Activated CD8-positive, alpha-beta T cell treated with anti-CD3 and anti-CD28 coated beads, Interleukin-2, amount 10 ng/mL, durations not matched to agents 7 days and 5 days (primary cell): ENCODE measurements at regions of chr9 and their contacts with region 1.

Region 1: DNA sequence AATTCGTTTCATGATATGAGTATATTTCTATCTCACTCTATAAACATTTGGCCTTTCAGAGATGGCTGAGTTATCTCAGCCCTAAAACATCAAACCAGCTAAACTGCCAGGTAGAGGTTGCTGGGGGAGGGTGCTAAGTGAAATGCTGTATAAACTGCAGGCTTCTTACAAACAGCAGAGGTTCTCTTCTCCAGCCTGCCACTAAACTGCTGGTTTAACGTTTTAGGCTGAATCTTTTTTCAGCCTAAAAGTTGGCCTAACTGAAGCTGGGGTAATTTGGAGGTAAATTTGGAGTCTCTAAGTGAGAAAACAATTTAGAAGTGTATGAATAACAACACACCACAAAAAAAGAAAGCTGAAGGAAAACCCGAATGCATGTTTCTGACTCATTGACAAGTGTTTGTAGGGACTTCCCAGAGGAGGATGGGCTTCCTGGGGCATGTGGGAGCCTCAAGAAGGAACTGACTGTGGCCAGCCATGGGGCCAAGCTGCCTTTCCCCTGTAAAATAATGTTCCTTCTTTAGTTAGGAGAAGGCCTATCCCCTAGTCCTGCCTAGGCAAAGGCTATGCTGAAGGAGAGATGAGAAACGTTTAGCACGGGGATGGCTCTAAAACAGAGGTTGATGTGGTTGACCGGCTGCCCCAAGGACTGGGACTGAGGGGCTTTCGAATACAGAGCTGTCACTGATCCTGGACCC is 44.3 kb downstream of the SLC28A3 start:
- DNase-seq: peak; percentile 34
- ATAC-seq: peak; percentile 50
- H3K4me3 Mint-ChIP-seq: peak overlapping the region; percentile 15
- H3K27ac Mint-ChIP-seq: peak overlapping the region; percentile 81
- H3K4me1 Mint-ChIP-seq: peaks cover 64% of the 10 kb centered on the region
- H3K27me3 Mint-ChIP-seq: no peaks in the 10 kb centered on the region

Region 2: GRCh38 chr9:83920927-83921707 is 375.2 kb before region 1 on chr9 and contains the start of gene KIF27:
- CTCF ChIA-PET with region 1: interaction called, 11 read pairs
- POLR2A ChIA-PET with region 1: interaction called, 7 read pairs
- DNase-seq: peak; percentile 98
- ATAC-seq: peak; percentile 91
- H3K4me3 Mint-ChIP-seq: peak within 1 kb of the TSS; percentile 82
- H3K27ac Mint-ChIP-seq: peak within 1 kb of the TSS; percentile 90
- H3K4me1 Mint-ChIP-seq: peaks cover 17% of the 10 kb centered on the region
- H3K27me3 Mint-ChIP-seq: no peaks in the 10 kb centered on the region
- total RNA-seq, gene KIF27: 1.9 to 3.2 TPM

Region 3: GRCh38 chr9:83980395-83981125 is 315.7 kb before region 1 on chr9 and contains the start of gene RMI1:
- CTCF ChIA-PET with region 1: interaction called, 5 read pairs
- POLR2A ChIA-PET with region 1: interaction called, 27 read pairs
- DNase-seq: peak; percentile 99
- ATAC-seq: peak; percentile 73
- H3K4me3 Mint-ChIP-seq: peak within 1 kb of the TSS; percentile 95
- H3K27ac Mint-ChIP-seq: peak within 1 kb of the TSS; percentile 99
- H3K4me1 Mint-ChIP-seq: peaks cover 49% of the 10 kb centered on the region
- H3K27me3 Mint-ChIP-seq: no peaks in the 10 kb centered on the region
- total RNA-seq, gene RMI1: 23.3 to 23.6 TPM

Region 4: DNA sequence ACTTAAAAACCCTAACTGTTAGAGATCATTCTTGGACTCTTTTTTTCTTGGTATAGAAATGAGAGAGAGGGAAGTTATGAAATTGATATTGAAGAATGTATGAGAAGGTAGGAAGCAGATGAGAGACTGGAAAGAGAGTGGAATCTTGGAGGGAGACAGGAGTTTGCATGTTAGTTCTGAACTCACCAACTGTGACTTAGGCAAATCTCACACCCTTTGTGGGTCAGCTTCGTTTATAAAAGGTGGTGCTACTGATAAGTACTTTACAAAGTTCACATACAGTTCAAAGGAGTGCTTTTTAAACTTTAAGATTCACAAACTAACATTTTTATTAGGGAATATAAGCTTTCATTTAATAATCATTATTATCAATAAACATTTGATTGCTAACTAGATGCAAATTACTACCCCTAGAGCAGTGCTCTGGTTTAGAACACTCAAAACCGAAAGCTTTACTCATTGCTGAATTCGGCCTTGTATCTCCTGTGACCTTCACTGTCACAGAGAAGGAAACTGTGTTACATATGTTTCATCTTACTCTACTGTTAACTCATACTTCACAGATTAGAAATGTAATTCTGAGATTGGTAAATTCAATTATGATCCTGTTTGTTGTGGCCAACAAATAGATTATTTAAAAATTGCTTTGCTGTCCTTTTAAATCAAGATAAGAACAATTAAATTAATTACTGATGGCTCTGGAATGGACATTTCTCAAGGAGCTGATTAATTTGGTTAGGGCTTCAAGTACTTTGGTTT is 172.5 kb before region 1 on chr9:
- CTCF ChIA-PET with region 1: no interaction called
- POLR2A ChIA-PET with region 1: no interaction called
- DNase-seq: no peak
- ATAC-seq: no peak
- H3K4me3 Mint-ChIP-seq: no peak overlapping the region
- H3K27ac Mint-ChIP-seq: no peak overlapping the region
- H3K4me1 Mint-ChIP-seq: no peaks in the 10 kb centered on the region
- H3K27me3 Mint-ChIP-seq: peaks cover 4% of the 10 kb centered on the region

Region 5: GRCh38 chr9:84174486-84174885 is 121.8 kb before region 1 on chr9:
- CTCF ChIA-PET with region 1: interaction called, 11 read pairs
- POLR2A ChIA-PET with region 1: no interaction called
- DNase-seq: no peak
- ATAC-seq: no peak
- H3K4me3 Mint-ChIP-seq: no peak overlapping the region
- H3K27ac Mint-ChIP-seq: no peak overlapping the region
- H3K4me1 Mint-ChIP-seq: peaks cover 2% of the 10 kb centered on the region
- H3K27me3 Mint-ChIP-seq: no peaks in the 10 kb centered on the region

Region 6: DNA sequence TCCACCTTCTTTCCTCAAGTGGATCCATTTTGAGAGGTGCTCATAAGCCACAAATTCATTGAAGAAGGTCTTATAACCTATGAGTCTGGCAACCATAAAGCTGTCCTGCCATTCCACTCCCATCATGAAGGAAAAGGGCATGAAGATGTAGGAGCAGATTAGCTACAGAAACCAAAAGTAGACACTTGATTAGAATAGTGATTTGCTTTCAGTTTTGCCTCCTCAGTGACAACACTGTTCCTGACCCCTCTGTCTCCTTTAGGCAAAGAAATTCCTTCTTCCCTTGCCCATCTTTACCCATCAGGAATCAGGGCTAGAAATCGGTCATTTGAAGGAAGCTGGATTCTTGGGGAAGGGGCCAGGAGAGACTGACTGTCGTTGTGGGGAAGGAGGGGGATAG is 10.9 kb before region 1 on chr9:
- CTCF ChIA-PET with region 1: interaction called, 25 read pairs
- POLR2A ChIA-PET with region 1: interaction called, 4 read pairs
- DNase-seq: no peak
- ATAC-seq: no peak
- H3K4me3 Mint-ChIP-seq: no peak overlapping the region
- H3K27ac Mint-ChIP-seq: no peak overlapping the region
- H3K4me1 Mint-ChIP-seq: peaks cover 20% of the 10 kb centered on the region
- H3K27me3 Mint-ChIP-seq: peaks cover 11% of the 10 kb centered on the region

Region 7: DNA sequence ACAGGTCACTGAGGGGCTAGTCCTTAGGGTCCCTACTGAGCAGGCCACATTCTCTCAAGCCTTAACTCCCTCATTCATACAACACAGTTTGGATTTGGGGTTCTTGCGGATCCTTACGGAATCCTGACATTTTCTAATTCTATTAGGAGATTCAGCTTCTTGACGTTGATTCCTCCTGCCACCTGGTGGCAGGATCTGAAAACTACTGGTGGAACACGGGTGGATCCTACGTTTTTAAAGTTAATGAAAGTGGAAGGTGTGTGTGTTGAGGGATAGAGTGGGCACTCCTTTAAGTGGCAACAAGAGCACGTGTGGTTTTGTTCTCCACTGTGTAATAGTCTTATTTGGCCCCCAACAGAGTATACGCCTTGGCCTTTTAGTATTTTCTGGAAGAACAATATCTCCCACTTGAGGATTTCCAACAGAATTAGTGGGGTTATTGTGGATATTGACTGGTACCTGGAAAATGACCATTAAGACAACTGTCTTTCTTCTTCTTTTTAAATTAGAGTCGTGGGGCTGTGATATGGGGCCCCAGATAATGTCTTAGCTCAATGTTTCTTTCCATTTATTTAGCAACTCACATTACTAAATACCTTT is 19.1 kb after region 1 on chr9:
- CTCF ChIA-PET with region 1: interaction called, 190 read pairs
- POLR2A ChIA-PET with region 1: interaction called, 3 read pairs
- DNase-seq: peak; percentile 67
- ATAC-seq: peak; percentile 73
- H3K4me3 Mint-ChIP-seq: no peak overlapping the region
- H3K27ac Mint-ChIP-seq: no peak overlapping the region
- H3K4me1 Mint-ChIP-seq: peaks cover 4% of the 10 kb centered on the region
- H3K27me3 Mint-ChIP-seq: no peaks in the 10 kb centered on the region